ENCODE measurements at regions of chr3 and their contacts with region 1.

Region 1: DNA sequence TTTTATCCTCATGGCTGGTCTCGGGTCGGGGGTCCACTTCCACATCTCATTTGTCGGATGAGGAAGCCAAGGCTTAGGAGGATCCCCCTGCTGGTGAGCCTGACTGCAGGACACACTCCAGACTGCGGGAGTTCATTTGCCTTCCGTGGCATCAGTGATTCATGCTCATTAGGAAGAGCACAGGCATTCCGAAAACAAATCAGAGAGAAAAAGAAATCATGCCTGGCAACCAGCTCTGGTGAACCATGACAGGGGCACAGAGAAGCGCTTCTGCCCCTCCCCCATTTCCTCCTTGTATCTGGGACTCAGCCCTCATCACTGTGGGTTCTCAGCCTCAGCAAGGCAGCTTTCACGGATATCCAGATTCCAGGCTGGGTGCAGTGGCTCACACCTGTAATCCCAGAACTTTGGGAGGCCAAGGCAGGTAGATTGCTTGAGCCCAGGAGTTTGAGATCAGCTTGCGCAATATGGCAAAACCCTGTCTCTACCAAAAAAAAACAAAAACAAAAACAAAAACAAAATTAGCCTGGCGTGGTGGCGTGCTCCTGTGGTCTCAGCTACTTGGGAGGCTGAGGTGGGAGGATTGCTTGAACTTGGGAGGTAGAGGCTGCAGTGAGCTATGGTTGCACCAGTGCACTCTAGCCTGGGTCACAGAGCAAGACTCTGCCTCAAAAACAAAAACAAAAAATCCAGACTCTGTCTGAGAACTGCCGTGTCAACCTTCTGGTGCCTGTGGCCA is 28.4 kb downstream of the IRAK2 start:
- DNase-seq: peak; percentile 93
- H3K4me3 Mint-ChIP-seq: peak overlapping the region; percentile 42
- H3K27ac Mint-ChIP-seq: peak overlapping the region; percentile 96
- H3K4me1 Mint-ChIP-seq: peaks cover 85% of the 10 kb centered on the region
- H3K27me3 Mint-ChIP-seq: no peaks in the 10 kb centered on the region

Region 2: DNA sequence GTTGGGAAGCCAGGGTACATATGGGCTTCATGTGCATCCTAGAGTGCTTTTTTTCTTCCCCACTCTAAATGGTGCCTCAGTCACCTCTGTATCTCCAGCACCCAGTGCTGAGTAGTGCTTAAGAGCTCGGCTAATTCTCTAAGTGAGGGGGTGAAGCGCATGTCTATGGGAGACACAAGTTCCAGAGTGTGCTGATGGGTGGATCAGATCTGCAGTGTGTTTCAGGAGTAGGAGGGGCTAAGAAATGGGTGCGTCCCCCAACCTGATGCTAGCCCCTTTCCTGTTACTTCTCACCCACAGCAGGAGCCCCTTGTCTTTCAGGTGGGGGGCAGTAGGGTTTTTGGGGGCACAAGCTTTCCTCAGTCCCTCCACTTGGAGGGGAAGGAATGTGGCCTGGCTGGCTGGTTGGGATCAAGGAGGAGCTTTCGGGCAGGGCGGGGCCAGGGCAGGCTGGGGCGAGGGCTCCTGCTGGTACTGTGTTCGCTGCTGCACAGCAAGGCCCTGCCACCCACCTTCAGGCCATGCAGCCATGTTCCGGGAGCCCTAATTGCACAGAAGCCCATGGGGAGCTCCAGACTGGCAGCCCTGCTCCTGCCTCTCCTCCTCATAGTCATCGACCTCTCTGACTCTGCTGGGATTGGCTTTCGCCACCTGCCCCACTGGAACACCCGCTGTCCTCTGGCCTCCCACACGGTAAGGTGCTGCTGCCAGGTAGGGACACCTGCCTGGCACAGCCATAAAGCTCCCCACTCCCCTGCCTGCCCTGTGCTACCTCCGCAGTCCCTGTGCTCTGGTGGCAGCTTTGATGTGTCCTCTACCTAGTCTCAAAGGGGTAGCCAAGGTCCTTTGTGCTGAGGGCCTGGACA is 290.5 kb before region 1 on chr3 and contains the start of gene IL17RE:
- CTCF ChIA-PET with region 1: no interaction called
- intact Hi-C with region 1: no loop called
- DNase-seq: no peak
- H3K4me3 Mint-ChIP-seq: no peak within 1 kb of the TSS
- H3K27ac Mint-ChIP-seq: no peak within 1 kb of the TSS
- H3K4me1 Mint-ChIP-seq: peaks cover 38% of the 10 kb centered on the region
- H3K27me3 Mint-ChIP-seq: no peaks in the 10 kb centered on the region
- total RNA-seq, gene IL17RE: 0.24 to 0.25 TPM

Region 3: DNA sequence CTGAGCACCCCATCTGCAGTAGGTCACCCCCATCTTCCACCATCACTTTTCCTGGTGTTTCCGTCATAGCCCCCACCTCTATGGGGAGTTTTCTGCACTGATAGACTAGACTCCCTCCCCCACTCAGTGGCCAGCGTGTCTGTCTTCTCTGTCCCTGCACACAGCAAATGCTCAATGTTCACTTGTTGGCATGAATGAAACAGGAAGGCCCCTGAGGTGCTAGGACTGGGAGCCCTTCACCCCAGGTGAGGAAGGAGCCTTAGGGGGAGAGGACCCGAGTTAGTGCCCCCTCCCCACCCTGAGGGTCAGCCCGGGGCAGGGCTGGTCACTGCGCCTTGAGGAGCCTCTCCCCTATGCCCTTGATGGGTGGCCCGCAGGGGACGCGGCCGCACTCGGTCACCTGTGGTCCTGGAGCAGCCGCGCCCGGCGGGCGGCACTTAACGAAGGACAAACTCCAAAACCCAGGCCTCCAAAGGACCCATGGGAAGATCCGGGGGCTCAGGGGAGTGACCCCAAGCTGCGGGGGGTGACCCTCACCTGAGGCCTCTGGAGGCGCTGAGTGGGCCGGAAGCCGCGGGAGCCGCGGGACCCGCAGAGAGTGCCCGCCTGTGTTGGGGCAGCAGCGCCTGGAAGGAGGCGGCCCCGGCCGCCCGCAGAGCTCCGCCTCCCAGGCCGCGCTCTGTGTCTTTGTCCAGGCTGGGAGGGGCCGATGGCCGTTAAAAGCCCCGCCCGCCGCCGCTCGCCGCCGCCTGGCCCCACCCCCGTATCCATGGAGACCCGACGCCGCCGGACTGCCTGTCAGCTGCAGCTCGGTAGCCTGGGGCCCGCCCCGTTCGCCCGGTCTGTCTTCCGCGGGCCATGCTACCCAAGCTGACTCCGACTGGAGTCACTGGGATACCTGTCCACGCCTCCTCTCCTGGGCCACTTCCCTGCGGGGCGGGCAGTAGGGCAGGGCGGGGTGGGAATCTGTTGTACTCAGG is 182.3 kb before region 1 on chr3:
- CTCF ChIA-PET with region 1: no interaction called
- intact Hi-C with region 1: no loop called
- DNase-seq: peak; percentile 85
- H3K4me3 Mint-ChIP-seq: peak overlapping the region; percentile 12
- H3K27ac Mint-ChIP-seq: no peak overlapping the region
- H3K4me1 Mint-ChIP-seq: peaks cover 13% of the 10 kb centered on the region
- H3K27me3 Mint-ChIP-seq: peaks cover 6% of the 10 kb centered on the region

Region 4: GRCh38 chr3:10142707-10143566 is 50.2 kb before region 1 on chr3:
- CTCF ChIA-PET with region 1: interaction called, 3 read pairs
- intact Hi-C with region 1: loop called (anchors 2 kb)
- DNase-seq: peak; percentile 48
- H3K4me3 Mint-ChIP-seq: peak overlapping the region; percentile 84
- H3K27ac Mint-ChIP-seq: peak overlapping the region; percentile 87
- H3K4me1 Mint-ChIP-seq: peaks cover 32% of the 10 kb centered on the region
- H3K27me3 Mint-ChIP-seq: no peaks in the 10 kb centered on the region

Region 5: GRCh38 chr3:10205451-10206165 is 12.5 kb after region 1 on chr3:
- CTCF ChIA-PET with region 1: interaction called, 19 read pairs
- intact Hi-C with region 1: loop called (anchors 1 kb)
- DNase-seq: no peak
- H3K4me3 Mint-ChIP-seq: no peak overlapping the region
- H3K27ac Mint-ChIP-seq: peak overlapping the region; percentile 7
- H3K4me1 Mint-ChIP-seq: peaks cover 29% of the 10 kb centered on the region
- H3K27me3 Mint-ChIP-seq: no peaks in the 10 kb centered on the region

Region 6: GRCh38 chr3:10242182-10243065 is 49.3 kb after region 1 on chr3:
- CTCF ChIA-PET with region 1: interaction called, 3 read pairs
- intact Hi-C with region 1: loop called (anchors 1 kb)
- DNase-seq: peak; percentile 91
- H3K4me3 Mint-ChIP-seq: peak overlapping the region; percentile 36
- H3K27ac Mint-ChIP-seq: peak overlapping the region; percentile 83
- H3K4me1 Mint-ChIP-seq: peaks cover 64% of the 10 kb centered on the region
- H3K27me3 Mint-ChIP-seq: no peaks in the 10 kb centered on the region

Measured in activated naive CD4-positive, alpha-beta T cell treated with anti-CD3 and anti-CD28 coated beads for 36 hours (primary cell).